ENCODE measurements at regions of chr10 and their contacts with region 1.

Region 1: GRCh38 chr10:24690961-24691512 is 32.6 kb downstream of the ARHGAP21 start:
- DNase-seq: no peak
- H3K4me3 ChIP-seq: no peak overlapping the region
- H3K27ac ChIP-seq: no peak overlapping the region
- H3K4me1 ChIP-seq: no peaks in the 10 kb centered on the region
- CTCF ChIP-seq: no peak

Region 2: GRCh38 chr10:24680647-24681524 is 10.2 kb before region 1 on chr10:
- CTCF ChIA-PET with region 1: no interaction called
- POLR2A ChIA-PET with region 1: interaction called, 11 read pairs
- intact Hi-C with region 1: no loop called
- DNase-seq: no peak
- H3K4me3 ChIP-seq: no peak overlapping the region
- H3K27ac ChIP-seq: no peak overlapping the region
- H3K4me1 ChIP-seq: peaks cover 5% of the 10 kb centered on the region
- CTCF ChIP-seq: no peak